GM10248 (cell line): ENCODE measurements at regions of chr11 and their contacts with region 1.

Region 1: DNA sequence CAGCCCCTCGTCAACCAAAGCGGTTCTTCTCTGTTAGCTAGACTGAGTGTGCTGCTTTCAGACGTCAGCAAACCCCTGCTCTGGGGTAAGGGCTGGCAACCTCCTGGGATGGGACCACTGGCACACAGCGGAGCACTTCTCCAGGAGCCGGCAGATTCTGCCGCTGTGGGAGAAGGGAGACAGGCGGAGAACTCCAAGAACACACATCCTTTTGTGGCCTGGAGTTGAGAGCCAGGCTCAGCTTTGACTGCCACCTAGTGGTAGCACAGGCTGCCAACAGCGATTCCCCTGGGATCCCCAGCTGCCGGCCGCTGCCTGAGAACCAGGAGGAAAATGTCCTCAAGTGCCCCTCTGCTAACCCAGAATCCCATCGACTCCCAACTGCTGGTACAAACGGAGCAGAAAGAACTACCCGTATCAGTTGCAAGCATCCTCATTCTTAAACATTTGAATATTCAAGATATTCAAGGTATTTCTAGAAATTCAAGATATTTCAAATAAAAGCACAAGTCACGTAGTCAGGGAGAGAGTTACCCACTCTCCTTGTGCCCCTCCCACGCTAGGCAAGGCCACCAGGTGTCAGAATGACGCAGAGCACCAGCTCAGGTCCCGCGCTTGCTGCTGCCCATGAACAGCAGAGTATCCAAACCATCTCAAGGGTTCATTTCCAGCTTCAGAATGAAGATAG is 4.9 kb downstream of the LTO1 start:
- DNase-seq: peak; percentile 86
- CTCF ChIP-seq: peak; percentile 97

Region 2: DNA sequence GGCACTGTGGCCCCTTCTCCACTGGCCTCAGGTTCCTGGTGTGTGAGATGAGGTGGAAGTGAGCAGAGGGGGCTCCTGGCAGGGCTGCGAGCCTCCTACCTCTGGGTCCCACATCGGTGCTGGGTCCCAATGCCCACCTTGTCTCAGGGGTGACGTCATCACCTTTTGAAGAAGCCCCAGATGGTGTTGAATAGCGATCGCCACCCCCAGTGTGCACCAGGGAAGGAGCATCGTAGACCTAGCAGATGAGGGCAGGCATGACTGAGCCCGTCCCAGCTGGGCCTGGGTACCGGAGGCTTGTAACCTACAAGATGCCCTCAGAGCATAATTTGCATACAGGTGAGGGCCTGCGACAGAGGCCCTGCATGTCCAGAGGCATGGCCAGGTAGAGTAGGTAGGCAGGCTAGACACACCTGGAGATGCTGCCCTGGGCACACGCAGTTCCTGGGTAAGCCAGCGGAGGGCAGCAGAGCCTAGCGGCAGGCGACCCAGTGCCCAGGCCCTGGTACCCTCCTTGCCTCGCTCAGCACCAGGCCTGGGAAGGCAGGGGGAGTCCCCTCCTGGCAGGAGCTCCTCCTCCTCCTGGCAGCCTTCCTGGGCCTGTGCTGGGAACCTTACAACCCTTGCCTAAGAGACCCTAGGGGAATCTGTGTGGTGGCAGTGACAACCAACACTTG is 569.0 kb before region 1 on chr11:
- CTCF ChIA-PET with region 1: interaction called, 32 read pairs
- POLR2A ChIA-PET with region 1: no interaction called
- DNase-seq: peak; percentile 86
- CTCF ChIP-seq: peak; percentile 99

Region 3: GRCh38 chr11:69292221-69292648 is 378.1 kb before region 1 on chr11:
- CTCF ChIA-PET with region 1: interaction called, 15 read pairs
- POLR2A ChIA-PET with region 1: no interaction called
- DNase-seq: no peak
- CTCF ChIP-seq: peak; percentile 79

Region 4: DNA sequence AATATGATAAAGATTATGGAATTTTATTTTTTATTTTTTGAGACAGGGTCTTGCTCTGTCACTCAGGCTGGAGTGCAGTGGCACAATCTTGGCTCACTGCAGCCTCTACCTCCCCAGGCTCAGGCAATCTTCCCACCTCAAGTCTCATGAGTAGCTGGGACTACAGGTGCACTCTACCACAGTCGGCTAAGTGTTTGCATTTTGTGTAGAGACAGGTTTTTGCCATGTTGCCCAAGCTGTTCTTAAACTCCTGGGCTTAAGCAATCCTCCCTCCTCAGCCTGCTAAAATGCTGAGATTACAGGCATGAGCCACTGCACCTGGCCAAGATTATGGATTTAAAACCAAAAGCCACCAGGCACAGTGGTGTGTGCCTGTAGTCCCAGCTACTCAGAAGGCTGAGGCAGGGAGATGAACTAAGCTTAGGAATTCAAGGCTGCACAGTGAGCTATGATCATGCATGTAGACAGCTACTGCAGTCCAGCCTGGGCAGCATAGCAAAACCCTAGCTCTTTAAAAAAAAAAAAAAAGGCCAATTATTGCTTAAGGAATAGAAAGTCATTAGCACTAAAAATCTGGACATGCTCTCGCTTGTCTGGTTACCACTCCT is 49.5 kb before region 1 on chr11:
- CTCF ChIA-PET with region 1: no interaction called
- POLR2A ChIA-PET with region 1: no interaction called
- DNase-seq: no peak
- CTCF ChIP-seq: no peak

Region 5: GRCh38 chr11:69683764-69684333 is 13.5 kb after region 1 on chr11:
- CTCF ChIA-PET with region 1: interaction called, 11 read pairs
- POLR2A ChIA-PET with region 1: interaction called, 3 read pairs
- DNase-seq: no peak
- CTCF ChIP-seq: no peak